Breast epithelium (tissue), 4 donors: ENCODE measurements at regions of chr3 and their contacts with region 1.

Region 1: GRCh38 chr3:190575437-190576185 is 61.7 kb downstream of the IL1RAP start:
- DNase-seq: no peak
- H3K4me3 ChIP-seq: no peak overlapping the region
- H3K27ac ChIP-seq: no peak overlapping the region
- H3K4me1 ChIP-seq: no peaks in the 10 kb centered on the region
- H3K27me3 ChIP-seq: no peaks in the 10 kb centered on the region
- CTCF ChIP-seq: no peak
- POLR2A ChIP-seq: no peak

Region 2: DNA sequence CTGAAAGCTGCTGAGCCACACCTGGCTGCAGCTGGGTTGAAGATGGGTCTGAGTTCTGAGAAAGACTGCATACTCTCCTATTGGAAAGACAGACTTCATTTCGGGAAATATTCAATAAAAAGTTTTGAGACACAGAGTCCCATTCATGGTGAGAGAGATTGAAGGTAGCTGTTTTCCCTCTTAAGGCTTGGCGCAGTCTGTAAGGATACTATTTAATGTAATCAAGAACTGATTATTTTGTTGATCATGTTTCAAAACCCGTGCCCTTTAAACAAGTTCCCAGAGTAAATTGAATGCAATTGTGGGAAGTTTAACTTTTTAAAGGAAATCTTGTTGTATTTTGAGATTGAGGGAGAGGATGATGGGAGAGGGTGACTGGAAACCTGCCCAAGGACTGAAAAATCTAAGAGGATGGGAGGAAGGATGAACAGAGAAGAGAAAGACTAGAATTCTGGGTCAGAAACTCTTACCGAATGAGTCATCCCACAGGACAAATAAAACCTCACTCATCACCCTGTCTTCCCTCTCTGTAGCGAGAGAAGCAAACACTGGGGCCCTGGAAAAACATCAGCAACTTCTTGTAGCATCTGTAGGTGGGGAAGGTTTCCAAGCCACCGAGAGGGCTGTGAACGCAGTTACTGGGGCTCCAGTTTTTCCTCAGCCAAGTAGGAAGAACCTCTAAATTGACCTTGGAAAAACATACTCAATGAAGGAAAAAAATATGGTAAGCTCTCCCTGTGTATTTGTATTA is 1597.0 kb before region 1 on chr3:
- intact Hi-C with region 1: loop called (anchors 10 kb)
- DNase-seq: no peak
- H3K4me3 ChIP-seq: peak overlapping the region in 1 of 3 donors; percentile 13
- H3K27ac ChIP-seq: peak overlapping the region; percentile 69 to 80
- H3K4me1 ChIP-seq: peaks cover 0 to 3% of the 10 kb centered on the region in 2 donors
- H3K27me3 ChIP-seq: no peaks in the 10 kb centered on the region
- CTCF ChIP-seq: no peak
- POLR2A ChIP-seq: no peak